ENCODE measurements at regions of chr12 and their contacts with region 1.

Region 1: DNA sequence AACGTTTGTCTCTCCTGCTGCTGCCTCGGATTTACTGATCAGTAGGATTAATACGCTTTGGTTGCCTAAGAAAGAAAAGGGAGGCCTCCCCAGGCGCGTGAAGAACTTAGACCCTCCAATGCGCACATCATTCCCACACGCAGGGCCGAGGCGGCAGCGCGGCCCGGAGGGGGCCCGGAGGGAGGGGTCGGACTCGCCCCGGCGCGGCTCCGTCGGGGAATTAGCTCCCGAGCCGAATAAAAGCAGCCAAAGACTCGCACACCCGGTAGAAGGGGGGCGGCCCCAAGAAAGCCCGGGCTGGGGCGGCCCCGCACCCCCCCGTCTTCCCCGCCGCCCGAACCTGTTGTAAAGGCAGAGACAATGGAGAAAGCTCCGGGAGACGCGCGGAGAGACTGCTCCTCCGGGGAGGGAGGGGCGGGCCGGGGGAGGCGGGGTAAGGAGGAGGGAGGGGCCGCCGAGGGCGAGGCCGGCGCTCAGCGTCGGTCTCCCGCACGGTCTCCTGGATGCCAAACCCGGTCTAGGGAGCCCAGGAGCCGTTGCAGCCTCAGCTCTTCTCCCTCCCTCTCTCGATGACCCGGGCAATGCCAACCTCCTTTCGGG is at the start of gene NELL2:
- DNase-seq: peak; percentile 83
- H3K4me3 Mint-ChIP-seq: peak within 1 kb of the TSS; percentile 99
- H3K27ac Mint-ChIP-seq: peak within 1 kb of the TSS; percentile 61
- H3K4me1 Mint-ChIP-seq: peaks cover 29% of the 10 kb centered on the region
- H3K27me3 Mint-ChIP-seq: peaks cover 14% of the 10 kb centered on the region
- total RNA-seq, gene NELL2: 40.5 to 43.5 TPM

Region 2: GRCh38 chr12:44774815-44775411 is 101.1 kb before region 1 on chr12:
- CTCF ChIA-PET with region 1: interaction called, 85 read pairs
- POLR2A ChIA-PET with region 1: interaction called, 4 read pairs
- intact Hi-C with region 1: loop called (anchors 1 kb)
- DNase-seq: peak; percentile 71
- H3K4me3 Mint-ChIP-seq: no peak overlapping the region
- H3K27ac Mint-ChIP-seq: no peak overlapping the region
- H3K4me1 Mint-ChIP-seq: peaks cover 5% of the 10 kb centered on the region
- H3K27me3 Mint-ChIP-seq: no peaks in the 10 kb centered on the region

Region 3: DNA sequence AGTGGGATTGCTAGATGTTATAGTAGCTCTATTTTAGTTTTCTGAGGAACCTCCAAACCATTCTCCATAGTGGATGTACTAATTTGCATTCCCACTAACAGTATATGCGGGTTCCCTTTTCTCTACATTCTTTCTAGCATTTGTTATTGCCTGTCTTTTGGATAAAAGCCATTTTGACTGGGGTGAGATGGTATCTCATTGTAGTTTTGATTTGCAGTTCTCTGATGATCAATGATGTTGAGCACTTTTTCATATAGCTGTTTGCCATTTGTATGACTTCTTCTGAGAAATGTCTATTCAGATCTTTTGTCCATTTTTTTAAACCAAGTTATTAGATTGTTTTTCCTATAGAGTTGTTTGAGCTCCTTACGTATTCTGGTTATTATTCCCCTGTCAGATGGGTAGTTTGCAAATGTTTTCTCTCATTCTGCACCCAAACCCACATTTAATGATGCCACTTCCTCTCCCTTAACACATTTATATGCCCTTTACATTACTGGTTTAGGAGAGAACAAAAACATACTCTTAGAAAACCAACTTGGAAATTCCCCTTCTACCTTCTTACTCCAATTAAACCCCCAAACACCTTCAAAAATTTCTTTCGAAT is 48.1 kb before region 1 on chr12:
- CTCF ChIA-PET with region 1: interaction called, 29 read pairs
- POLR2A ChIA-PET with region 1: interaction called, 7 read pairs
- intact Hi-C with region 1: loop called (anchors 5 kb)
- DNase-seq: no peak
- H3K4me3 Mint-ChIP-seq: peak overlapping the region; percentile 42
- H3K27ac Mint-ChIP-seq: peak overlapping the region; percentile 89
- H3K4me1 Mint-ChIP-seq: peaks cover 57% of the 10 kb centered on the region
- H3K27me3 Mint-ChIP-seq: no peaks in the 10 kb centered on the region

Region 4: DNA sequence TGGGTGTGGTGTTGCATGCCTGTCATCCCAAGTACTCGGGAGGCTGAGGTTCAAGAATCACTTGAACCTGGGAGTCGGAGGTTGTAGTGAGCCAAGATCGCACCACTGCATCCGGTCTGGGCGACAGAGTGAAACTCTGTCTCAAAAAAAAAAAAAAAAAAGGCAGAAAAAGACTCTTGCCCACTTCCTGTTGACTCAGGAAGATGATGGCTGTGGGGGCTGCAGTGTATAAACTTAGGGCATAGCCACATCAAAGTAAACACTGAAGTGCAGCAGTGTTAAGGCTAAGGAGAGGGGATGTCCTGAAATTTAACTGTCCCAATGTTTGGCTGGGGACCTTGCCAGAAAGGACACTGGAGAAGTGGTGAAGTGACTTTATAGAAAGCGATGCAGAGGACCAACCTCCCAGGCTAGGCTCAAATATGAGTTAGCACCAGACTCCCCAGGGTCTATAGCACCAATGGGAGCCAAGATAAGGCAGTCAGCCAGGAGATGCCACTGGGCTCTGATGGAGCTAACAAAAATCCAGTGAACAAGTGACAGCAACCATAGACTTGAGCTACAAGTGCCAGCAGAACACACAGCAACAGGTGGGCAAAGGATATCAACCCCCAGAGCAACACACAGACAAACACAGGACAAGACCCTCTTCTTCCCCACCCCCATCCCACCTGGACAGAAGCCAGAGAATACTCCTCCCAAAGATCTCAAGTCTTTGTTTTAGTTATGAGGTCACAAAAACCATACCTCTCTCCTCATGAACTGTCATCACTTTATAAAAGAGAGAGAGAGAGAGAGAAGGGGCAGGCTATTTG is 28.0 kb before region 1 on chr12:
- CTCF ChIA-PET with region 1: interaction called, 7 read pairs
- POLR2A ChIA-PET with region 1: interaction called, 8 read pairs
- intact Hi-C with region 1: loop called (anchors 1 kb)
- DNase-seq: peak; percentile 81
- H3K4me3 Mint-ChIP-seq: peak overlapping the region; percentile 69
- H3K27ac Mint-ChIP-seq: peak overlapping the region; percentile 94
- H3K4me1 Mint-ChIP-seq: peaks cover 79% of the 10 kb centered on the region
- H3K27me3 Mint-ChIP-seq: no peaks in the 10 kb centered on the region

Region 5: GRCh38 chr12:45200491-45201043 is 324.5 kb after region 1 on chr12:
- CTCF ChIA-PET with region 1: no interaction called
- POLR2A ChIA-PET with region 1: no interaction called
- intact Hi-C with region 1: no loop called
- DNase-seq: no peak
- H3K4me3 Mint-ChIP-seq: peak overlapping the region; percentile 8
- H3K27ac Mint-ChIP-seq: no peak overlapping the region
- H3K4me1 Mint-ChIP-seq: peaks cover 20% of the 10 kb centered on the region
- H3K27me3 Mint-ChIP-seq: no peaks in the 10 kb centered on the region

Measured in activated CD4-positive, alpha-beta memory T cell treated with anti-CD3 and anti-CD28 coated beads for 36 hours (primary cell).